Adrenal gland (tissue), 19 donors: ENCODE measurements at regions of chr5 and their contacts with region 1.

Region 1: DNA sequence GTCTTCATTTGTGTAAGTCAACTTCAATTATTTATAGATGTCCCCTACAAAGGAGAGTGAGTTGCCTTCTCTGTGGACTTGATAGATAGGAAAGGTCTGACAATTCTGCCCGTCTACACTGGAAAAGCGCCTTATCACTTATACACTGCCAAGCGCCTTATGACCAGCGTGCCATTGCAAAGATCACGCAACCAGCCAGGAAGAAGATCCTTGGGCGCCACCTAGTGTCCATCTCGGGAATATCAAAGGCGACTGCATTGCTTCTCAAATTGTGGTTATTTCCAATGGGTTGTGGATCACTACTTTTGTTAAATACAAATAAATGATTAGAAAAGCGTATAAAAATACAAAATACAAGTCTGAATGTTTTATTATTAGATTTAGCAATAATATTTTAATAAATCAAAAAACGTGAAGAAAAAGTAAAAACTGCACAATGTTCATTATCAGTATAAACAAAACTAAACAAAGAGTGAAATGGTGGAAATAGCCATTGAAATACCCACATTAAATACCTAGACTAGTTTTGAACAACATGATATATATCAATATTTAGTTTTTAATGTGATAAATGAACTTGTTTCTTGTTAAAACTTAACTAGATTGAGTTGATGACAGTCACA is 27.8 kb downstream of the SUB1 start:
- DNase-seq: peak; percentile 78 to 96 (median 88)
- H3K4me3 ChIP-seq: no peak overlapping the region
- H3K27ac ChIP-seq: no peak overlapping the region
- H3K4me1 ChIP-seq: peaks cover 0 to 4% of the 10 kb centered on the region in 2 donors
- H3K27me3 ChIP-seq: no peaks in the 10 kb centered on the region
- CTCF ChIP-seq: peak; percentile 87 to 96 (median 91)
- POLR2A ChIP-seq: no peak

Region 2: DNA sequence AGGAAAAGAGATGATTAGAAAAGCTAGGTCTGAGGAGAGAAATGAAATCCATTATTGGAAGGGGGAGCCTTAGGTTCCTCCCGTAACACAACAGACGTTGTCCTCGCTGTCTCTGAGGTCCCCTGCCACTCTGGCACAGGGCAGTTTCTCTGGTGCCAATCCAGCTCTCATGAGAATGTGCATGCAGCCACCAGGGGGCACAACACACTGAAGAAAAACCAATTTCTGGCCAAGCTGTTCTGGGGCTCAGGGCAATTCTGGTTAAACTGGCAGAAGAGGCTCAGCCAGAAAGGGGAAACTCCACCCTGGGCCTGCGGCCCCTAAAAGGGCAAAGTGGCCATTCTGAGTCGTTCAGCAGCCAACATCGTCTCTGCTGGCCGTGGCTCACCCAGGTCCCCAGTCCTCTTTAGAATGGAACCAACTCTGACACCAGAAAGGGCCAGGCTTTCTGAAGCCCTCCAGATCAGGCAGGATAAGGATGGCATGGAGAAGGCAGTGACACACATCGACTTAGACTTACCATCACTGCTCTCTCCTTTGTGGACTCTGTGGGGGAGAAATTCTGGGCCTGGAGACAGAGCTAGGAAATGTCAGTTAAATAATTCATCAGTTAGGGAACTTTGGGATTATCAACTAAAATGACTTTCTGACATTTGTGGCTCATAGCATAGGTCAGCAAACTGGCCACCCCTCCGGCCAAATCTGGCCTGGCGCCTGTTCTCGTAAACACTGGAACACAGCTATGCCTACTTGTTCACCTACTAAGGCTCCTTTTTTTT is 380.5 kb before region 1 on chr5:
- intact Hi-C with region 1: loop called in 1 of 2 experiments (anchors 10 kb)
- DNase-seq: peak; percentile 81 to 93 (median 86)
- H3K4me3 ChIP-seq: no peak overlapping the region
- H3K27ac ChIP-seq: peak overlapping the region in 3 of 5 donors; percentile 65 to 89 (median 69)
- H3K4me1 ChIP-seq: peaks cover 19 to 33% of the 10 kb centered on the region in 2 donors
- H3K27me3 ChIP-seq: no peaks in the 10 kb centered on the region
- CTCF ChIP-seq: peak; percentile 83 to 94 (median 88)
- POLR2A ChIP-seq: no peak